Activated T-helper 2 cell treated with anti-CD3 and anti-CD28 coated beads, Interferon-gamma antibody, Interleukin-2, Interleukin-4, amounts not matched to agents 10 μg/mL and 5 μg/mL and 100 μg/mL, durations not matched to agents 14 hours and 24 hours and 36 hours (primary cell): ENCODE measurements at regions of chr5 and their contacts with region 1.

Region 1: GRCh38 chr5:154072414-154073171 is 33.8 kb downstream of the MFAP3 start:
- DNase-seq: peak; percentile 77
- H3K4me3 Mint-ChIP-seq: no peak overlapping the region
- H3K27ac Mint-ChIP-seq: peak overlapping the region; percentile 54
- H3K4me1 Mint-ChIP-seq: peaks cover 51% of the 10 kb centered on the region
- H3K27me3 Mint-ChIP-seq: peaks cover 6% of the 10 kb centered on the region

Region 2: GRCh38 chr5:154038707-154039457 is 33.7 kb before region 1 on chr5 and contains the starts of genes FAM114A2 and MFAP3:
- intact Hi-C with region 1: loop called (anchors 2 kb)
- DNase-seq: peak; percentile 87
- H3K4me3 Mint-ChIP-seq: peak within 1 kb of the TSS; percentile 98
- H3K27ac Mint-ChIP-seq: peak within 1 kb of the TSS; percentile 94
- H3K4me1 Mint-ChIP-seq: peaks cover 37% of the 10 kb centered on the region
- H3K27me3 Mint-ChIP-seq: no peaks in the 10 kb centered on the region
- total RNA-seq, gene FAM114A2: 23.6 and 31.2 TPM in 2 replicates
- total RNA-seq, gene MFAP3: 17.1 and 21.8 TPM in 2 replicates

Region 3: DNA sequence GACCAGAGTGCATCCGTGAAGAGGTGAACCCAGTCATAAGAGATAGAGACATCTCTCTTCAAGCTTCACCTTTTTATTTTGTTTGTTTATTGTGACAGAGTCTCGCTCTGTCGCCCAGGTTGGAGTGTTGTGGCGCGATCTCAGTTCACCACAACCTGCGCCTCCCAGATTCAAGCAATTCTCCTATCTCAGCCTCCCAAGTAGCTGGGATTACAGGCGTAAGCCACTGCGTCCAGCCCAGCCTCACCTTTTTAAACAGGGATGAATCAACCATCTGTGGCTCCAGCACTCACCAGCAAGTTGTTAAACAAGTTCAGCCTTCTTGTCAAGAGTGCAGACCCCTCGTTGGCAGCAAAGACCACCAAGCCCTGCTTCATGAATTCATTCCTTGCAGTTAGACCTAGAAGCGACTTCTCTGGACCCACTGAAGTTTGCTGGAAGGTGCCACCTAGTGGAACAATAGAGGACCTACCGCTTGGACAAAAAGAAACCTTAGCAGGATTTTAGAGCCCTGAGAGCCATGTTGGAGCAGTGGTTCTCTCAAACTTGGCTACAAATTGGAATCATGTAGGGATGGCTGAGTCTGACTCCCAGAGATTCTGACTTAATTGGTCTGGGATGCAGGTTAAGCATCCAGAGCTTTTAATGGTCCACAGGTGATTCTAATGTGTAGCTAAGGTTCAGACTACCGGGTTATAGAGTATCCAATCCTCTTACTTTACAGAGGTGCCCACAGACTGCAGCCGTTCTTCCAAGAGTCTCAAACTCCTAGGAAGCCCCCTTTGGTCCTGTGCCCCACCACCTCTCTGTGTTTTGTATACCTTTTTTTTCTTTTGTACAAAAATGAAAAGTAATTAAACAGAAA is 107.5 kb after region 1 on chr5:
- intact Hi-C with region 1: loop called (anchors 1 kb)
- DNase-seq: no peak
- H3K4me3 Mint-ChIP-seq: no peak overlapping the region
- H3K27ac Mint-ChIP-seq: no peak overlapping the region
- H3K4me1 Mint-ChIP-seq: peaks cover 16% of the 10 kb centered on the region
- H3K27me3 Mint-ChIP-seq: peaks cover 19% of the 10 kb centered on the region

Region 4: DNA sequence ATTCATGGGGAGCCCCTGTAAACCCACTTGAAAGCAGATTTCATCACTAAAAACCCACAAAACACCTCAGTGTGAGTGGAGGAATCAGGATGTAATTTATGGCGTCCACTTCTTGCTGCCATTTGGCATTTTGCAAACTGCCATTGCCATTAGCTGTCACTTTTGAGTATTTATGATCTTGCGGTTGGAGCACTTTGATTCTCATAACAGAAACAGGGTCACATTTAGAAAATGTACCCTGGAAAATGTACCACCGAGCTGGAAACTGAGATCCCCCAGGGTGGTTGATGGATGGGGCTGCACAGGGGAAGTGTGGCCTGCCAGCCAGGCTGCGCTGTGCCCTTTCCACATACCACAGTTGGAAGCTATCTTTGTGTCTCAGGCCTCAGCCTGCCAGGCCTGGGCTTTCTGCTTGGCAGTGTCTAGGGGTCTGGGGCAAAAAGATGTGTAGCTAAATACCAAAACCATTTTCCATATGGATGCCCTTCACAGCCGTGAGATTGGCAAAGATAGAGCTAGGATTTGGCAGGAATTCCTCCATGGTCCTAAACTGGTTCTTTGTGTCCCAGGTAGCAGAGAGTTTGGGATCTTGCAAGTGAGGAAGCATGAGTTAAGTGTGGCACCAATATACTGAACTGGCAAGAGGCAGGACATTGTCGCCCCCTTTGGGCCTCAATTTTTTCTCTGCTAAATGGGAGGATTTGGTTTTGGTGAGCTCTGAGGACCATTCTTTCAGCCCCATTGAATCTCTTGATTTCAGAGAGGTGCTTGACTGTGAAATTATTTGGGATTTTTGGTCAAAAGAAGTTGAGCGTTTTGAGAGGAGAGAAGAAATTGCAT is 164.2 kb after region 1 on chr5:
- intact Hi-C with region 1: loop called (anchors 2 kb)
- DNase-seq: no peak
- H3K4me3 Mint-ChIP-seq: no peak overlapping the region
- H3K27ac Mint-ChIP-seq: no peak overlapping the region
- H3K4me1 Mint-ChIP-seq: peaks cover 29% of the 10 kb centered on the region
- H3K27me3 Mint-ChIP-seq: no peaks in the 10 kb centered on the region

Region 5: DNA sequence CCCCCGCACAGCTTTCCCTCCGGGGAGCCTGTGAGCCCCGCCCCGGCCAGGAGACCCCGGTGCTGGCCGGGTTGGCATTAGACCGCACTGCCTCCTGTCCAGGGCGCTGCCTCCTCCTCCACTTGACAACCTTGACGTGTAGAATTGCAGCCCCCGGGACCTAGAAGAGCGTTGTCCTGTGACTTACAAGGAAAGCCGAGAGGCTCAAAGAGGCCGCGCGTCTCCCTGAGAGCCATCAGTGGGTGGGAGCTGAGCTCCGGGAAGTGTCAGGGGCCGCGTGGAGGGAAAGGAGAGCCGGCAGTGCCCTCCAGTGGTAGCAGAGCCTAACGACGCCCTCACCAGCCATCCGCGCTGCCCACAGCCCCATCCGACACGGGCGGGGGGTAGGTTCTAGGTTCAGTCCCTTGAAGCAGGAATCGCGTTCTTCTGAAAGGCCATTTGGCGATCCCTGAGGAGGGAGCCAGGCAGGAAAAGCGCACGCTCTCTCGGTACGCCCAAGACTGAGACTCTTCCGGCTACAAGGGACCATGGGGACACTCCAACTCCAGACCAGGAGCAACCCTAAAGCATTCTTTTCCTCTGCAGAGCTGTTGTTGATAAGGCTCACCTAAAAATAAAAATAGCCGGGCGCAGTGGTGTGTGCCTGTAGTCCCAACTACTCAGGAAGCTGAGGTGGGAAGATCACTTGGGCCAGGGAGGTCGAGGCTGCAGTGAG is 332.6 kb after region 1 on chr5:
- intact Hi-C with region 1: loop called (anchors 1 kb)
- DNase-seq: peak; percentile 56
- H3K4me3 Mint-ChIP-seq: peak overlapping the region; percentile 26
- H3K27ac Mint-ChIP-seq: no peak overlapping the region
- H3K4me1 Mint-ChIP-seq: peaks cover 9% of the 10 kb centered on the region
- H3K27me3 Mint-ChIP-seq: no peaks in the 10 kb centered on the region

Region 6: DNA sequence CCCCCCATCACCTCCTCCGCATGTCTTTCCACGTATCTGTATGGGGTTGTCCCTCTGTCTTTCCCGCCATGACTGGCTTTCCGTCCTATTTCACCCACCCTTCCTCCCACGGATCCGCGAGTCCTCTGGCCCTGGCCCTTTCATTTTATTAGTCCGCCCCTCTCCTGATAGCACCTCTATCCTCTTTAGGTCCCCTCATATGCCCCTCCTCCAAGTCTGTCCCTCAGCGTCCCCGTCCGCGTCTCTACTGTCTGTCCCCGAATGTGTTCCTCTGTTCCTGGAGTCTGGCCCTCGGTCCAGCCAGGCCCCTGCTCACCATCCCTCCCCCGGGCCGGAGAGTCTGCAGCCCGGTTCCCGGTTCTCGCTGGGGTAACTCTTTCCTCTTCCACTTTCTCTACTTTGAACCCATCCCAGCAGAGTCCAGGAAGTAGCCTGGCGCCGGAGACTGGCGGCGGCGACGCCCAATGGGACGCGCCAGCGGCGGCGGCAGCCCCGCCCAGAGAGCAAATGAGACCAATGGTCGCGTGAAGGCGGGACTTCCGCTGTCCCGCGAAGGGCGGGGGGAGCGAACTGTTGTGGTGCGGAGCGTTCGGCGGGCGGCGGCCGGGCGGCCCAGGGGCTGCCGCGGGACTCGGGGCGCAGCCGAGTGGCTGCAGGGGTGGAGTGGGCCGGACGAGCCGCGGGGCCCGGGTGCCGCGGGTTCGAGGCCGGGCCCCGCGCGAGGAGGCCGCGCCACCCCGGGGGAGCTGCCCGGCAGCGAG is 373.0 kb after region 1 on chr5 and contains the start of gene SAP30L:
- intact Hi-C with region 1: loop called (anchors 1 kb)
- DNase-seq: peak; percentile 96
- H3K4me3 Mint-ChIP-seq: peak within 1 kb of the TSS; percentile 98
- H3K27ac Mint-ChIP-seq: peak within 1 kb of the TSS; percentile 94
- H3K4me1 Mint-ChIP-seq: peaks cover 31% of the 10 kb centered on the region
- H3K27me3 Mint-ChIP-seq: no peaks in the 10 kb centered on the region
- total RNA-seq, gene SAP30L: 35.9 and 36.0 TPM in 2 replicates

Region 7: GRCh38 chr5:154610321-154611154 is 537.9 kb after region 1 on chr5:
- intact Hi-C with region 1: loop called (anchors 5 kb)
- DNase-seq: peak; percentile 53
- H3K4me3 Mint-ChIP-seq: no peak overlapping the region
- H3K27ac Mint-ChIP-seq: no peak overlapping the region
- H3K4me1 Mint-ChIP-seq: peaks cover 4% of the 10 kb centered on the region
- H3K27me3 Mint-ChIP-seq: peaks cover 46% of the 10 kb centered on the region